ENCODE measurements at regions of chr13 and their contacts with region 1.

Region 1: DNA sequence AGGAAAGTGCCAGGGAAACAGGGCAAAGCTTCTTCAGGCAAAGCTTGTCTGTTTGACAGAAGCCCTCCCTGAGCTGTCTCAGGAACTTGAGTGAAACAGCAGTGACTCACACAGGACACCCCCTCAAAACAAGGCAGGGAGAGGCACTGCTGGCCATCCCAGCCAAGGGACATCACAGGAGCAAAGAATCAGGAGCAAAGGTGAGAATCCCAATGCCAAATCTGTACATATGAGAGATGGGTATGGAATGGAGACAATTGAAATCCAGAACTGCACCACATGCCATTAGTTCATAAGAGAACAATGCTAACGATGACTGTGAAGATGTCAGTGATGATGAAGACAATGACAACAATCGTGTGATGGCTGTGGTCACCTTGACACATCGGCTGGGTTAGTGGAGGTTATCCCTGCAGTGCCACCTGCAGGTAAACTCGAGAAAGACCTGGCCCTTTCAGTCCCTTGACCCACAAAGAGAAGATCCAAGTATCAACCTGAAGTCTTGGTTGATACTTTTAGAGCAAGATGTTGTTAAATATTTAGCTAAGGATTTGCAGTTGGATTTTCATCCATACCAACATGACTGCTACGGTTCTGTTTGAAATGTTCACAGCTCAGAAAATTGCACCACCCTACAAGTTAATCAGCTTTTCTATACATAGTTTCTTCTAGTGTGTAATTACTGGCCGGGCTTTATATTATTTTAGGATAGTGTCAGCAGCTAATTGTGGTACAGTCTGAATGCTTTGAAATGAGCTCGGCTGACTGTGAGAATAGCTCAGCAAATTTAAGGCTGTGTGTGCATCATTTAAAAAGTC is 42.0 kb upstream of the IPO5 start:
- DNase-seq: peak; percentile 13 to 22 (median 15)
- ATAC-seq: peak; percentile 75; the same call in 2 of the 3 replicates
- H3K4me3 ChIP-seq: no peak overlapping the region
- H3K27ac ChIP-seq: no peak overlapping the region
- H3K4me1 ChIP-seq: no peaks in the 10 kb centered on the region
- H3K27me3 ChIP-seq: no peaks in the 10 kb centered on the region
- CTCF ChIP-seq: peak; percentile 43 to 62 (median 56); a peak in 4 of 6 replicates
- EP300 ChIP-seq: no peak
- POLR2A ChIP-seq: no peak
- RAD21 ChIP-seq: peak; percentile 31 to 58; a peak in 3 of 4 replicates

Region 2: GRCh38 chr13:97855570-97856303 is 55.8 kb before region 1 on chr13:
- CTCF ChIA-PET with region 1: interaction called, 17 read pairs
- POLR2A ChIA-PET with region 1: interaction called, 4 read pairs
- in situ Hi-C with region 1: no loop called
- intact Hi-C with region 1: loop called (anchors 1 kb)
- DNase-seq: peak; percentile 39 to 63 (median 56)
- ATAC-seq: peak; percentile 89
- H3K4me3 ChIP-seq: no peak overlapping the region
- H3K27ac ChIP-seq: no peak overlapping the region
- H3K4me1 ChIP-seq: no peaks in the 10 kb centered on the region
- H3K27me3 ChIP-seq: peaks cover 0 to 14% of the 10 kb centered on the region in 2 experiments; a peak in 2 of 5 replicates
- CTCF ChIP-seq: peak; percentile 59 to 79 (median 67)
- EP300 ChIP-seq: no peak
- POLR2A ChIP-seq: no peak
- RAD21 ChIP-seq: peak; percentile 64 to 81

Measured in K562 (cell line).